ENCODE measurements at regions of chr12 and their contacts with region 1.

Region 1: DNA sequence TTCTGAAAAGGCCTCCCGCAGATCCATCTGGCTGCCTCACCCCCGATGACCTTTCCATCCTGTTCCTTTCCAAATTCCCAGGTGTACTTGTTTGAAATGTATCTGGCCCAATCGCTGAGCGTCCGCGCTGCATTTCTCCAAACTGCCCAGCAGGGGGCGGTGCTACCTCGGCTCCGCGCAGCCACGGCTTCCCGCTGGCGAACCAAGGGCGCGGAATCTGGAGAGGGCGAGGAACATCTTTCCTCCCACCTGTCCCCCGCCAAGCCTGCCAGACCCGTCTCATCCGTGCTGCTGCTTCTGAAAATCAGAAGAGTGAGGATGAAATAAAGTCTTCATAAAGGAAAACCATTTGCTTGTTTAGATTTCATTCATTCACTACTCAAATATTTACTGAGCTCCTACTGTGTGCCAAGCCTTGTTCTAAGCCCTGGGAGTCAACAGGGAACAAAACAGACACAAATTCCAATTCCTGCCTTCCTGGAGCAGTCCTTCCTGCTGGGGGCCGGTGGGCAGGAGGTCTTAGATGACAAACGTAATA is 16.8 kb upstream of the MYL2 start:
- DNase-seq: peak in 1 of 2 donors; percentile 67
- ATAC-seq: peak in 6 of 8 donors; percentile 45 to 69 (median 64)
- H3K4me3 ChIP-seq: peak overlapping the region in 5 of 10 donors; percentile 0 to 41 (median 21)
- H3K27ac ChIP-seq: peak overlapping the region in 2 of 10 donors; percentile 20 to 66
- H3K4me1 ChIP-seq: peaks cover 0 to 27% (median 4%) of the 10 kb centered on the region in 9 donors
- H3K27me3 ChIP-seq: peaks cover 0 to 24% (median 6%) of the 10 kb centered on the region in 7 donors
- CTCF ChIP-seq: peak; percentile 85 to 96 (median 92)

Region 2: DNA sequence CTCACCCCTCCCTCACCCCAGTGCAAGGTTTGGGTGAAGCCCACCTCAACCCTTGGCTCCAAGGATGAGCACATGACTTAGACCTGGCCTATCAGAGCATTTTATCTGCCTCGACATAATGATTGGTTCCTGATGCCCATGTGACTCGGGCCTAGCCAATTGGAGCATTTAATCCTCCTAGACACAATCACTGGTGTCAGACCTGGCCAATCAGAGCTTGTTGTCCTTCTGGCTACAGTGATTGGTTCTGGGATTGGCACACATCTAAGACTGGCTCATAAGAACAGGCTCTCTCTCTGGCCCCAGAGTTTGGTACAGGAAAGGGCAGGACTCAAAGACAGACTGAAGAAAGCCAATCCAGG is 56.3 kb after region 1 on chr12:
- intact Hi-C with region 1: loop called in 1 of 10 experiments (anchors 5 kb)
- DNase-seq: no peak
- ATAC-seq: no peak
- H3K4me3 ChIP-seq: no peak overlapping the region
- H3K27ac ChIP-seq: no peak overlapping the region
- H3K4me1 ChIP-seq: peaks cover 0 to 10% (median 0%) of the 10 kb centered on the region in 9 donors
- H3K27me3 ChIP-seq: no peaks in the 10 kb centered on the region
- CTCF ChIP-seq: no peak

Region 3: GRCh38 chr12:111298582-111299436 is 361.6 kb after region 1 on chr12:
- intact Hi-C with region 1: loop called in 7 of 10 experiments (anchors 1 to 10 kb)
- DNase-seq: peak; percentile 23 to 35
- ATAC-seq: peak; percentile 45 to 84 (median 68)
- H3K4me3 ChIP-seq: no peak overlapping the region
- H3K27ac ChIP-seq: no peak overlapping the region
- H3K4me1 ChIP-seq: no peaks in the 10 kb centered on the region
- H3K27me3 ChIP-seq: peaks cover 0 to 5% (median 0%) of the 10 kb centered on the region in 7 donors
- CTCF ChIP-seq: peak; percentile 62 to 91 (median 80)

Region 4: GRCh38 chr12:111304642-111305071 is 367.5 kb after region 1 on chr12:
- intact Hi-C with region 1: loop called in 7 of 10 experiments (anchors 2 to 10 kb)
- DNase-seq: no peak
- ATAC-seq: no peak
- H3K4me3 ChIP-seq: no peak overlapping the region
- H3K27ac ChIP-seq: no peak overlapping the region
- H3K4me1 ChIP-seq: no peaks in the 10 kb centered on the region
- H3K27me3 ChIP-seq: no peaks in the 10 kb centered on the region
- CTCF ChIP-seq: peak in 8 of 9 donors; percentile 29 to 62 (median 47)

Region 5: DNA sequence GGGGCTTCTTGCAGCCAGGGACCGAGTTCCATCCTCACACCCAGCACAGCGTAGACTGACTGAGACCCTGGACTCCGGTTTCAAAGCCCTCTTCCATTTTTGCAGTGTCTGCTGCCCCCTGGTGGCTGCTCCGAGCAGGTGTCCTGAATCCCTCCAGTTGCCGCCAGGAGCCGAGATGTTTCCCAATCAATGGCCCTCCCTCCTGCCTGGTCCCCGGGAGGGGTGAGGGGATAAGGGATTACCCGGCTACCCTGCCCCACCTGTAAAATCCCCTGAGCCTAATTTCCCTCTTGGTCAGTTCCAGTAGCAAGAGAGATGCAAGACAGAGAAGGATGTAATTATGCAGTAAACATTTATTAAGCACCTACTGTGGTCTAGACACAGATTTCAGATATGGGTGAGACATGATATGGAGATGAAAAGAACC is 376.7 kb after region 1 on chr12:
- intact Hi-C with region 1: loop called in 9 of 10 experiments (anchors 5 to 10 kb)
- DNase-seq: peak; percentile 65 to 73
- ATAC-seq: peak; percentile 61 to 79 (median 77)
- H3K4me3 ChIP-seq: peak overlapping the region in 1 of 10 donors; percentile 40
- H3K27ac ChIP-seq: peak overlapping the region in 1 of 10 donors; percentile 52
- H3K4me1 ChIP-seq: peaks cover 0 to 9% (median 0%) of the 10 kb centered on the region in 9 donors
- H3K27me3 ChIP-seq: peaks cover 0 to 14% (median 3%) of the 10 kb centered on the region in 7 donors
- CTCF ChIP-seq: peak; percentile 82 to 97 (median 92)

Measured in heart right ventricle (tissue), 16 donors.